IMR-90 (cell line): ENCODE measurements at regions of chr14 and their contacts with region 1.

Region 1: GRCh38 chr14:96852823-96853422 is 55.7 kb downstream of the VRK1 start:
- DNase-seq: peak; percentile 72
- ATAC-seq: peak; percentile 98
- H3K4me3 ChIP-seq: no peak overlapping the region
- H3K27ac ChIP-seq: no peak overlapping the region
- H3K4me1 ChIP-seq: 0 out of 2 replicates have a peak, but pooled peaks cover 1% of the 10 kb centered on the region
- H3K27me3 ChIP-seq: no peaks in the 10 kb centered on the region
- CTCF ChIP-seq: peak; percentile 70
- POLR2A ChIP-seq: no peak
- RAD21 ChIP-seq: peak; percentile 54

Region 2: DNA sequence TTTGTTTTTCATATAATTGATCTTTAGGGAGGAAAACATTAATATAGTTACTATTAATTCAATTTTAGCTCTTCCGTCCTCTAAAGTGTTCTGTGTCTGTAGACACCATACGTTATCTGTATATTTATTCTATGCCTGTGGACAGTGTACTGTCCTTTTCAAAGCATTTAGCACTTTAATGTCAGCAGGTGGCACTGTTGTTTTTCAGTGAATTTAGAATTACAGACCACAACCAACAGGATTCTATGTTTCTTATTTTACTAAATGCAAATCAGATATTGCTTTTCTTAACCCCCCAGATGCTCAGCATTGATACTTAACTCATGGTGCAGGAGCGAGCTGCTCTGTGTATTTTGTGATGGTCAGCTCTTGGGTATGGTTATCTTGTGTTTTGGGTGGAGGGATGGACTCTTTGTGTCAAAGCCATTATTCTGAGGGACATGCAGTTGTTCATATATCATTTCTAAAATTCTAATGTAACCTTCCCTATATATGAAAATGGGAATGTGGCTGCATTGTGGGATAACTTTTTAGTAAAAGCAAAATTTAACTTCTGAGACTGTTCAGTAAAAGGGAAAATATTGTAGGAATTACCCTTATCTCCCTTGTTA is 285.5 kb before region 1 on chr14:
- CTCF ChIA-PET with region 1: no interaction called
- POLR2A ChIA-PET with region 1: no interaction called
- dilution Hi-C with region 1: no loop called
- in situ Hi-C with region 1: no loop called
- intact Hi-C with region 1: loop called (anchors 1 kb)
- DNase-seq: peak; percentile 50
- ATAC-seq: peak; percentile 89
- H3K4me3 ChIP-seq: no peak overlapping the region
- H3K27ac ChIP-seq: no peak overlapping the region
- H3K4me1 ChIP-seq: no peaks in the 10 kb centered on the region
- H3K27me3 ChIP-seq: no peaks in the 10 kb centered on the region
- CTCF ChIP-seq: peak; percentile 62
- POLR2A ChIP-seq: no peak
- RAD21 ChIP-seq: peak; percentile 57

Region 3: DNA sequence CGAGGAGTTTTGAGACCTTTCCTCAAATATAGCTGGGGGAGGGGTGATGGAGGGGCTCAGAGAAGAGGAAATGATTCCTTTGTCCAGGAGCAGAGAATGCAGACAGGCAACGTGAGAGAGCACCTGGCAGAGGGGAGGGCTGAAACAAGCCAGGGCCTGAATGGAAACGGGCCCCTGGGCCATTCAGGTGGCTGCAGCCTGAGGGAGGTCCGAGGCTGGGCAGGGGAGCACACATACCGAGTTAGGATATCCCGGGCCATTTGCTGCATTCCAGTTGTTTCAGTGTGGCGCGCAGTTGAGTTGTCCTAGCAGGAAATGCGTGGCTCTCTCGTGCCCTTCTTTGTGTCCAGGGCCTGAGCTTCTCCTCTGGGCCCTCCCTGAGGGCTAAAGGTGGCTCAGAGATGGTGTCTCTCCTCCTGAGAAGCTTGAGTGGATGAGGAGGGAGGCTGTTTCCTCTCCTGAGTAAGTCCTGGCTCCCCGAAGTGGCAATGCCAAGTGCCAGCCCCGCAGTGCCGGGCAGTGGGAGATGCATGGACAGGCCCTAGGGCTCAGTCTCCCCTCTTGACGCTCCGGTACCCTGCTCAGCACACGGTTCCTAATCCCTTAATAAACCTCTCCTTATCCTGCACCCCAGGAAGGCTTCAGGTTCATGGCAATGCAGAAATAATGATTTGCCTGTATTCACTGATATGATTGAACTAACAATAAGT is 141.2 kb before region 1 on chr14:
- CTCF ChIA-PET with region 1: no interaction called
- POLR2A ChIA-PET with region 1: no interaction called
- dilution Hi-C with region 1: no loop called
- in situ Hi-C with region 1: no loop called
- intact Hi-C with region 1: no loop called
- DNase-seq: no peak
- ATAC-seq: no peak
- H3K4me3 ChIP-seq: no peak overlapping the region
- H3K27ac ChIP-seq: no peak overlapping the region
- H3K4me1 ChIP-seq: no peaks in the 10 kb centered on the region
- H3K27me3 ChIP-seq: no peaks in the 10 kb centered on the region
- CTCF ChIP-seq: no peak
- POLR2A ChIP-seq: no peak
- RAD21 ChIP-seq: no peak

Region 4: DNA sequence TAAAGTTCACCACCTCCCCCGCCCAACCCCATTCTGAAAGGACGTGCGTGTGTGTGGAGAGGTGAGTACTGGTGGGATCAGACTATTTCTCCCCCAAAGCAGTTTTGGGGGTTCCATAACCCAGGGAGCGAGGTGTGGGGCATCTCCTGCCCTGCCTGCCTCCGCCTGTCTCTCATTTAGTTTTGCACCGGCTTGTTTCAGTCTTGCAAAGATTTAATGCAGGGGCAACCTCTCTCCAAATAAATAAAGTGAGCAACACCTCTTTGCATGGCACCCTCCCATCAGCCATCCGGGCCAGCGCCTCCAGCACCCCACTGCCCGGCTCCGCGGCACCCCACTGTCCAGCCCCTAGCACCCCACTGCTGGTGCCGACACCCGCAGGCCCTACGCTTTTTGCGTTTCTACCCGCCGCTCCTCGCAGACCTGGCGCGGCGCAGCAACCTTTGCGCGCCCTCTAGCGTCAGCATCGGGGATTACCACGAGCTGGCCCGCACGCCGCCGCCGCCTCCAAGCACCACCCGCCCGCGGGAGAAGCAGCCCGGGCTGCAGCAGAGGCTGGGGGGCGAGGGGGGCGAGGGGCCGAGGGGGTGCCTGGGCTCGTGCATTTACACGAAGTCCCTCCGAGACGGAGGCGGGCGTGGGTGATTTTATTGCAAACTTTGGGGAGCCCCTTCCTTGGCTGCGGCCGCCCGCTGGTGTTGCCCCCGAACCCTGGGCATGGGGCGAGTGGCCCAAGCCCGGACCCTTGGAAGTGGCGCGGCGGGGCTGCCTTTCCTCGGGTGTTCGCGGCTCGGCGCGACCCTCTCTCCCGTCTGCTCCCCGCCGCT is 111.6 kb before region 1 on chr14:
- CTCF ChIA-PET with region 1: no interaction called
- POLR2A ChIA-PET with region 1: no interaction called
- dilution Hi-C with region 1: no loop called
- in situ Hi-C with region 1: no loop called
- intact Hi-C with region 1: loop called (anchors 5 kb)
- DNase-seq: peak; percentile 15
- ATAC-seq: peak; percentile 98
- H3K4me3 ChIP-seq: peak overlapping the region; percentile 40
- H3K27ac ChIP-seq: no peak overlapping the region
- H3K4me1 ChIP-seq: no peaks in the 10 kb centered on the region
- H3K27me3 ChIP-seq: peaks cover 42% of the 10 kb centered on the region
- CTCF ChIP-seq: peak; percentile 80
- POLR2A ChIP-seq: no peak
- RAD21 ChIP-seq: peak; percentile 69

Region 5: DNA sequence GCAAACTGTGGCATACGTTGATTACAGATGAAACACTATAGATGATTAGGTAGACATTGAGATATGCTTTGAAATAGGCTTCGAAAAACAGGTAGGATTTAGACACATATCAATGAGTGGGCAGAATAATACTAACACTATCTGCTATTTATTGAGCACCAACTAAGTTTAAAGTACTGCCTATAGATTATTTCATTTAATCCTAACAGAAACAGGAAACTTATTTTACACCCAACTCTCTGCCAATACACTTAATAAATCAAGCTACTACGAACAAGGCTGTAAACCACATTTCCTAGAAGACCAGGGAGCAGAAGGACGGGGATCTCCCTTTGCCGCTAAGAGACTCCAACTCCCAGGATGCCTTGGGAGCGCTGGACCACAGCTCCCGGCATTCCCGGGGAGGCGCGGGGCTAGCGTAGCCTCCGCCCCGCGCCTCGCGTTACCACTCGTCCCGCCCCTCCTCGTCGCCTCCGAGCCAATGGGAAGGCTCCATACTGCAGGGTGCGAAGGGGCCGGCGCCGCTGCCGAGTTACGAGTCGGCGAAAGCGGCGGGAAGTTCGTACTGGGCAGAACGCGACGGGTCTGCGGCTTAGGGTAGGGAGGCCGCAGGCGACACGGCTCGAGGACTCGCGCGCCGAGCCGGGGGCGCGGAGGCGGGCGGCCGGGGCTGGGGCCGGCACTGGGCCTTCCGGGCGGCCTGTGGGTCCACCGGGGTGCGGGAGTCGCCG is 55.9 kb before region 1 on chr14 and contains the start of gene VRK1:
- CTCF ChIA-PET with region 1: no interaction called
- POLR2A ChIA-PET with region 1: no interaction called
- dilution Hi-C with region 1: no loop called
- in situ Hi-C with region 1: no loop called
- intact Hi-C with region 1: loop called (anchors 2 kb)
- DNase-seq: peak; percentile 93
- ATAC-seq: peak; percentile 99
- H3K4me3 ChIP-seq: peak within 1 kb of the TSS; percentile 67
- H3K27ac ChIP-seq: peak within 1 kb of the TSS; percentile 39; the same call in 1 of the 2 replicates
- H3K4me1 ChIP-seq: no peaks in the 10 kb centered on the region
- H3K27me3 ChIP-seq: no peaks in the 10 kb centered on the region
- CTCF ChIP-seq: no peak
- POLR2A ChIP-seq: peak; percentile 73
- RAD21 ChIP-seq: no peak
- total RNA-seq, gene VRK1: 19.9 and 41.7 TPM in 2 replicates

Region 6: GRCh38 chr14:96805956-96806355 is 47.0 kb before region 1 on chr14:
- CTCF ChIA-PET with region 1: interaction called, 5 read pairs
- POLR2A ChIA-PET with region 1: no interaction called
- dilution Hi-C with region 1: no loop called
- in situ Hi-C with region 1: no loop called
- intact Hi-C with region 1: loop called (anchors 2 kb)
- DNase-seq: no peak
- ATAC-seq: no peak
- H3K4me3 ChIP-seq: no peak overlapping the region
- H3K27ac ChIP-seq: no peak overlapping the region
- H3K4me1 ChIP-seq: peaks cover 3% of the 10 kb centered on the region; the same call in 1 of the 2 replicates
- H3K27me3 ChIP-seq: no peaks in the 10 kb centered on the region
- CTCF ChIP-seq: no peak
- POLR2A ChIP-seq: no peak
- RAD21 ChIP-seq: no peak